ENCODE measurements at regions of chr1 and their contacts with region 1.

Region 1: DNA sequence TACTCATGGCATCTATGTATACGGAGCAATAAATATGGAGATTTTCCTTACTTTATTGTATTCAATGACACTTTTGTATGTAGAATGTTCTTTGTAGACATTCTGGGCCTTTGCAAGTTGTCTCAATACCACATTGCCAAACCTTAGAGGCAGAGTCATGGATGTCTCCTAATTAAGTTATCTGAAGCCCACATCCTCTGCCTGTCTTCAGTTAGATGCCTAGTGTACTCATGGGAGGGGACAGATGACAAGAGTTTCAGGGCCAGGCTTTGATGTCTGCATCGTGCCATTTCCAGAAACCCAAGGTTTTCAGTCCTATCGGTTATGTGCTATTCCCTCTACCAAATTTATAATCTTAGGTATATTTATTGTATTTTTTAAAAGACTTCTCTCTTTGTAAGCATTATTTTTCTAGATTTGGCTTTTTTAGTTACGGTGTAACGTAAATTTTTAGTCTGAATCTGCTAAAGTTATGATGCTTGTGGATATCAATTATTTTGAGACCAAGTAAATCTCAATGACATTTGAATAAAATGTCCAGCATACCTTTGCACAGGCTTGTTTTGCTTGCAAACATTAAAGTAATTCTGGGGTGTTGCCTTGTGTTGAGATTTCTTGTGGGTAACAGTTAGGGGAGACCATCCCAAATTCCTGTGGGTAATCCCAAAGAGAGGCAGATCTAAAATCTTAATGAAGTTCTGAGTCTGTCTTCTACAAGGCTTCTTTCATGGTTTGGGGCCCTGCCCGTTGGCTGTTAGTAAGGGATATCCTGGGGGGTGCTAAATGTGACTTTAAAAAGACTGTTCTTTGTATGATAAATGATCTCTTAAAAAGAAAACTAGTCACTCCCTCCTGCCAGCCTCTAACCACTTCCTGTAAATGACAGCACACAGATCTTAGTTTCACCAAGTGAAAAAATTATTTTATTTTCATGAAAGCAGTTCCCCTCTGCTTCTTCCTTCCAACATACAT is 8.0 kb upstream of the MACF1 start:
- DNase-seq: peak; percentile 89 to 97 (median 95)
- H3K4me3 ChIP-seq: peak overlapping the region in 6 of 7 experiments; percentile 25 to 58 (median 43)
- H3K27ac ChIP-seq: peak overlapping the region; percentile 89 to 92
- H3K4me1 ChIP-seq: peaks cover 40 to 87% (median 67%) of the 10 kb centered on the region in 4 experiments
- H3K27me3 ChIP-seq: no peaks in the 10 kb centered on the region

Region 2: GRCh38 chr1:39142401-39143151 is 54.0 kb before region 1 on chr1:
- CTCF ChIA-PET with region 1: interaction called, 115 read pairs
- POLR2A ChIA-PET with region 1: no interaction called
- DNase-seq: no peak
- H3K4me3 ChIP-seq: no peak overlapping the region
- H3K27ac ChIP-seq: no peak overlapping the region
- H3K4me1 ChIP-seq: peaks cover 0 to 1% (median 0%) of the 10 kb centered on the region in 4 experiments
- H3K27me3 ChIP-seq: no peaks in the 10 kb centered on the region

Region 3: DNA sequence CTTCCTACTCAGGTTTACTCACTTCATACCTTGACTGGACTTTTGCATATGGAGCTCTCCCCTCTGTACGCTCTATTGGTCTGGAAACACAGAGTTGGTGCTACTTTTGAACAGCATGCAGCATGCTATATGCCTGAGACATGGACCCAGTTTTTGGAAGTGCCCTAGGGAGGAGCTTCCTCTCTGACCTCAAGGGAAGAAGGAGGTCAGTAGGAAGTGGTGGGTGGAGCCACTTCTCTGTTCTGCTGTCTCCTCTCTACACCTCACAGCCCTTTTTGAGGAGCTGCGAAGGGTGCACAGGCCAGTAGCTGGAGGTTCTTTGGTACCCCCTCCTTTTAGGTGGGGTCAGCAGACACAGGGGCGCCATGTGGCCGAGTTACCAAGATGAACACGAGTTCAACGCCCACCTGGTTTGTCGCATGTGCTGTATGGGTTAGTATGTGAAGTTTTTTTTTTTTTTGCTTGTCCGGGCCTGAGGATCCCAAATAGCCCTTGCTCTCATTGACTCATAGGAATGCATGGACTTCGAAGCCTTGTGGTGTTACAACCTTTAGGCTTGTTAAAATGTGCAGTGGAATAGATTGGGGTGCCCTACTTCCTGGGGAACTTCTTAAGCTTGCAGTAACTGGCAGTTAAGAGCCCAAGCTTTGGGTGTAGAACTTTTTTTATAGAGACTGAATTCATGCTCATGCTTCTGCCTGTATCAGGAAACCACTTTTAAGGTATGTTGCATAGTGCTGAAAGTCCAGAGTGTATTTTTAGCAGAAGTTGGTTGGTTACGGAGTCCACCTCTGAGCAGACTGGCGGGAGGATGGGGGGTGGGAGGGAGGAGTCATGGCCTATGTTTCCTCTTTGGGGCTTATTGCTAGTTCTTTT is 18.7 kb after region 1 on chr1:
- CTCF ChIA-PET with region 1: interaction called, 123 read pairs
- POLR2A ChIA-PET with region 1: interaction called, 6 read pairs
- DNase-seq: peak; percentile 56 to 92 (median 88)
- H3K4me3 ChIP-seq: peak overlapping the region in 6 of 7 experiments; percentile 52 to 76 (median 70)
- H3K27ac ChIP-seq: peak overlapping the region; percentile 79 to 93
- H3K4me1 ChIP-seq: peaks cover 35 to 77% (median 59%) of the 10 kb centered on the region in 4 experiments
- H3K27me3 ChIP-seq: no peaks in the 10 kb centered on the region

Region 4: DNA sequence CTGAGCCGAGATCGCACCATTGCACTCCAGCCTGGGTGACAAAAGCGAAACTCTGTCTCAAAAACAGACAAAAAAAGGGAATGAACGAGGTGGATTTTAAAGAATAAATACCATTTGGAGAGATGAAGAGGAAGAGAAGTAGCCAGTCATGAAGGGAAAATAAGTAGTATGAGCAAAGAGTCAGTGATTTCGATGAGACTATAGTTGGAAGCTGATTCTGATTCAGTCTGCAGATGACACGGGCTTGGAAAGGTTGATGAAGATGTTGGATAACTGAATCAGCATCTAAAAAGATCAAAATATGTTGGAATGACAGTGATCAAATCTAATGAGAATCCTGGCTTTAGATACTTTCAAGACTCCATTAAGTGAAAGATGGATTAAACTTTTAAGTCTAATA is 31.7 kb after region 1 on chr1:
- CTCF ChIA-PET with region 1: interaction called, 123 read pairs
- POLR2A ChIA-PET with region 1: no interaction called
- DNase-seq: no peak
- H3K4me3 ChIP-seq: no peak overlapping the region
- H3K27ac ChIP-seq: no peak overlapping the region
- H3K4me1 ChIP-seq: peaks cover 15 to 42% (median 23%) of the 10 kb centered on the region in 4 experiments
- H3K27me3 ChIP-seq: no peaks in the 10 kb centered on the region

Region 5: DNA sequence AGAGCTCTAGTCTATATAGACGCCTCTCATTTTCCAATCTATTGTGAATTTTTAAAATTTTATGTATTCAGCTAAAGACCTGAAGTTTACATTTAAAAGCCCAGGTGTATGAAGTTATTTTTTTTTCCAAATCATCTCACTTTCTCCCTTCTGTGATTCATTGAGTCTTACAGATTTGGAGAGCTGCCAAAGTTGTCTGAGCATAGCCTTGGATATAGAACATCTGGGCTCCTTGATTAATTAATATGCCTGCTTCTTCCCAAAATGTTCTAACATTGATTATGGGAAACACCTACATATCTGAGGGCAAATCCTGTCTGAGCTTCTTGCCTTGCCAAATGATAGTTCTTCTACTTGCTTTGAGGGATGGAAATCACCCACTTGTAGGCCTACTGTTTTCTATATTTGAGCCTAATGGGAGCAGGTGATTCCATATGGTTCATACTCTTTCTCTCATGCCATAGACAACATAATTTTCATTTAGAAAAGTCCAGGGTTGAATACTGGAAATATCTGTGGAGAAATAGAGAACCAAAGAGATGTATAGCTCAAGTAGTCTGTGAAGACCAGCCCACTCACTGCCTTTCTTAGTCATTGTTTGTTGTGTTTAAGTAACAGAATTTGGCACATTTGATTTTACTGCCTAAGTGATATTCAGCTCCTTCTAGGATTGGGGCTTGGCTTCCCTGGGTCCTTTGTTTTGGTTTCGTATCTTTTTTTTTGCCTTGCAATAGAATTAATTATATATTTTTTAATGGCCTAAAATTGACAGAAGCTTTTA is 54.1 kb after region 1 on chr1:
- CTCF ChIA-PET with region 1: interaction called, 251 read pairs
- POLR2A ChIA-PET with region 1: no interaction called
- DNase-seq: no peak
- H3K4me3 ChIP-seq: no peak overlapping the region
- H3K27ac ChIP-seq: no peak overlapping the region
- H3K4me1 ChIP-seq: peaks cover 0 to 3% (median under 1%) of the 10 kb centered on the region in 4 experiments
- H3K27me3 ChIP-seq: no peaks in the 10 kb centered on the region

Region 6: GRCh38 chr1:39268112-39268581 is 71.6 kb after region 1 on chr1:
- CTCF ChIA-PET with region 1: interaction called, 251 read pairs
- POLR2A ChIA-PET with region 1: interaction called, 4 read pairs
- DNase-seq: peak; percentile 31 to 65 (median 57)
- H3K4me3 ChIP-seq: peak overlapping the region in 4 of 7 experiments; percentile 28 to 70 (median 50)
- H3K27ac ChIP-seq: peak overlapping the region; percentile 10 to 72
- H3K4me1 ChIP-seq: peaks cover 6 to 37% (median 13%) of the 10 kb centered on the region in 4 experiments
- H3K27me3 ChIP-seq: no peaks in the 10 kb centered on the region

Region 7: DNA sequence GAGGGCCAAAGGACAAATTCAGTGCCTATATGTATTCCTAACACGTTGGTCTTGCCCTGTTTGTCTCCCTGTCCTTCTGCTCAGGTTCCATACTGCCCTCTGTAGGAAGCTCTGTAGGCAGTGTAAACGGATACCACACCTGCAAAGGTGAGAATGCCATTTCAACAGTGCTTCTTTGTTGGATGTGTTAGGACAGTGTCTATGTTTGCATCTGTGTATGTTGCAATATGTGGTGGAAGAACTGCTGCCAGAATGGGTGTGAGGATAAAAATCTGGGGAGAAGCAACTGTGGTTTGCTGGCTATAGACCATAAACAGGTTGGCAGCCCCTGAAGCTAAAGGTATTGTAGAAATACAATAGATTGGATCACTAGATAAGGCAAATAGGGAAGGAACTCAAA is 181.8 kb after region 1 on chr1:
- CTCF ChIA-PET with region 1: no interaction called
- POLR2A ChIA-PET with region 1: no interaction called
- DNase-seq: peak in 2 of 3 donors; percentile 4 to 9
- H3K4me3 ChIP-seq: no peak overlapping the region
- H3K27ac ChIP-seq: no peak overlapping the region
- H3K4me1 ChIP-seq: no peaks in the 10 kb centered on the region
- H3K27me3 ChIP-seq: no peaks in the 10 kb centered on the region

Region 8: DNA sequence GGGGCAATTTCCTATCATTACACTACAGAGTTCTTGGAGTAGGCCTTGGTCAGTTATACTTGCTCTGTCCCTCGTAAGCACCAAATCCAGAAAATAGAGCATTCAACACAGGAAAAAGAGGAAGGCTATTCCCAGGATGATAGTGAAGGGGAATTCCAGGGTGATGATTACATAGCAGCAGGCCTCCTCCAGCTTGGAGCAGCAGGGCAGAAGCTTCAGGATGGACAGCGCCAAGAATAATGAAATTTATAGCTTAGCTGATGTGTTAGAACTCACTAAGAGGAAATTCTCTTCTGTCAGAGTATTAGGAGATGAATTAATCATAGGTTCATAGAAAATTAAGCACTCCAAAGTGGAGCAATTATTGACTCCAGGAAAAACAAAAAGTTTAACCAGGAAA is 1166.2 kb after region 1 on chr1:
- CTCF ChIA-PET with region 1: no interaction called
- POLR2A ChIA-PET with region 1: no interaction called
- DNase-seq: no peak
- H3K4me3 ChIP-seq: no peak overlapping the region
- H3K27ac ChIP-seq: no peak overlapping the region
- H3K4me1 ChIP-seq: peaks cover 0 to 6% (median 0%) of the 10 kb centered on the region in 4 experiments
- H3K27me3 ChIP-seq: no peaks in the 10 kb centered on the region